ENCODE measurements at regions of chr10 and their contacts with region 1.

Region 1: GRCh38 chr10:33330543-33331378 is 3.7 kb downstream of the NRP1 start:
- DNase-seq: peak; percentile 83
- ATAC-seq: no peak

Region 2: GRCh38 chr10:33125522-33126517 is 204.9 kb before region 1 on chr10:
- intact Hi-C with region 1: loop called (anchors 10 kb)
- DNase-seq: no peak
- ATAC-seq: peak; percentile 32

Region 3: GRCh38 chr10:33273295-33274002 is 57.3 kb before region 1 on chr10:
- intact Hi-C with region 1: loop called (anchors 2 kb)
- DNase-seq: peak; percentile 92
- ATAC-seq: peak; percentile 92

Region 4: GRCh38 chr10:33594475-33594874 is 263.7 kb after region 1 on chr10:
- intact Hi-C with region 1: no loop called
- DNase-seq: no peak
- ATAC-seq: no peak

Region 5: DNA sequence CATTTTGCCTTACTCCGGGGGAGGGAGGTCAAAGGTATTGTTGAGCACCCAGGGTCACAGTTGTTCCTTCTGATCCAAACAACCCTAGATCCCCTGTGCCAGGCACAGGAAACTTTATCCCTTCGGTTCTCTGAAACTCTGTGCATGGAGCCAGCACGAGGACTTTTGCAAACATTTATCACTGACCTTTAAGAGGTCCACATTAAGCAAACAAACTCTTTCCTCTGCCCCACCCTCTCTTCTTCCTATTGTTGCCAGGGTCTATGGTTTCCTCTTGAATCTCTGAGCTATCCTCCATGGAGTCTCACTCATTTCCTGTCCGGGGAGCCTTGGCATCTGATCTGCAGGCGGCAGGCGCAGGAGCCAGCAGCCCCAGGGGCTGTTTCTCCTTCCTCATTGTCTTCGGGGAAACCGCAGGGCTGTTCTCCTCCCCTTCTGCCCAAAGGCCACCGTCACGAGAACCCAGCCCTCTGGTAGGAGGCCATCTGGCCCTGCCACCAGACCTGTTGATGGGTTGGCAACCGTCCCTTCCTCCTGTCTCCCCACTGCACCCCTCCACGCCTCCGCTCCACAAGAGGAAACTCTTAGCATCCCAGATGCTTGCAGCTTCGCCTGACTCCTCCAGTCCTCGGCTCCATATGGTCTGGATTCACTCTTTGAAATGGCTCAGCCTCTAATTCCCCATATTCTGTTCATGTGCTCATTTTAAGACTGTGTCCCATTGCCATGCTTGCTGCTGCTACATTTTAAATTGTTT is 331.0 kb after region 1 on chr10:
- intact Hi-C with region 1: loop called (anchors 5 kb)
- DNase-seq: peak; percentile 84
- ATAC-seq: peak; percentile 78

Region 6: DNA sequence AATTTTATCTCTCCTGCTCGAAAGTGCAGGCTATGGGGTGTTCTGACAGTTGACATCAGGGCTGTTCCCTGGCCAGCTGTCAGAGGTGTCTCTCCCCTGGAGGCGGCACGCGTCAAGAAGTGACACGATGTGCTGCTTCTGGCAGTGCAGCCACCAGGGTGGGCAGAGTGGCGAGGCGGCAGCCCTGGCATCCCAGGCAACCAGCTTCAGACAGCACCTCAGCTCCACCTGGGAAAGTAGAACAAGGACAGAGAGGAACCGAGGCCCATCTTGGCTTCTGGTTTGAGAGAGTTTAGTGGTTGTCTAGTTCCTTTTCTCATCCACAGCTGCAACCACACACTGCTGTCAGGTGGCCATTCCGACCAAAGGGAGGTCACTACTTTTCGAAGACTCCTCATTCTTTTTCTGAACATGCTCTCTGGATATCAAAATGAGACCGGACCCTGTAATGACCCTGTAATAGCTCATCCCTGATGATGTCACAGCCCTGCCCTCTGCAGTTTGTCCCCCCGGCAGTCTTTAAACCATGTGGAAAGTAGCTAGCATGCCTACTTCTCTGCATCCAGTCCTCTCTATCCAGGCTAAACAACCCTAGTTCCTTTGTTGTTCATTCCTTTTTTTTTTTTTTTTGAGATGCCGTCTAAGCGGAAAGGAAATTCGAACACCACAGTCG is 384.7 kb after region 1 on chr10:
- intact Hi-C with region 1: loop called (anchors 5 kb)
- DNase-seq: no peak
- ATAC-seq: peak; percentile 73

Region 7: GRCh38 chr10:33887188-33887587 is 556.4 kb after region 1 on chr10:
- intact Hi-C with region 1: loop called (anchors 5 kb)
- DNase-seq: no peak
- ATAC-seq: peak; percentile 34

Region 8: DNA sequence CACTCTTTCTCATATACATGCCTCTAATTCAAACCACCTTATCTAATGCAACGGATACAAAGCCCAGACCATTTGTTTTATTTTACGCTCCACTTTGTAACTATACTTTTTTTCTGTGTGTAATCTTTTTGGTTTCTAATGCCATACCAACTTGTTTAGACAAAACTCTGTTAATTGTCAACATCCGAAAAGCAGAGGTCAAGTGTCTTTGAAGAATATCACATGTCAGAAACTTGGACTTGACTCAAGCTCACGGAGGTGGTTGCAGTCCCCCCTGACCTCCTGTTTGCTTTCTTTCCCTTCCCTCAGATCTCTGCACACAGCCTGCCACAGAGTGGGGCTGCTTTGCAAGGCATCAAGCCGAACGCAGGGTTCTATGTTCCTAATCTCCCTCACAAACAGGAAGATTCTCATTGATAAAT is 785.5 kb after region 1 on chr10:
- intact Hi-C with region 1: loop called (anchors 5 kb)
- DNase-seq: no peak
- ATAC-seq: no peak